CD8-positive, alpha-beta memory T cell (primary cell): ENCODE measurements at regions of chr12 and their contacts with region 1.

Region 1: GRCh38 chr12:9813821-9814809 is 13.2 kb upstream of the KLRF1 start:
- DNase-seq: peak; percentile 82 to 92 (median 87)
- H3K4me3 ChIP-seq: peak overlapping the region; percentile 54
- H3K4me3 Mint-ChIP-seq: peak overlapping the region; percentile 81 to 93 (median 87)
- H3K27ac ChIP-seq: no peak overlapping the region
- H3K27ac Mint-ChIP-seq: peak overlapping the region; percentile 51 to 90 (median 84)
- H3K4me1 ChIP-seq: peaks cover 6% of the 10 kb centered on the region
- H3K4me1 Mint-ChIP-seq: peaks cover 10 to 18% (median 12%) of the 10 kb centered on the region in 3 donors
- H3K27me3 ChIP-seq: no peaks in the 10 kb centered on the region
- H3K27me3 Mint-ChIP-seq: peaks cover 3 to 20% of the 10 kb centered on the region in 2 donors

Region 2: DNA sequence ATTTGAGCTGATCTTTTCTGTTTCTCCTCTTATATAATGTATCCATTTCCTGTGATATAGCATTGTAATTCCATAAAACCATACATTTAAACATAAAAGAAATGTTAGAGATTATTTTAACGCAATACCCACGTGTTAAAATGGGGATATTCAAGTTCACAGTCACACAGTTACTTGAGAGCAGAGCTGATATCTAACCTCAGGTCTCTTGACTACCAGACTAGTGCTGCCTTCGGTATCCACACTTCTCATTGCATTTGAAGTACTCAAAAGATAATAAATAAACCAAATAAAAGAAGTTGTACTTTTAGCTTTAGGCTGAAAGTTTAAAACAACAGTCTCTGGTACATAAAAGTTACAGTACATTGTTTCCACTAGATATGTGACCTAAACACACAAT is 84.1 kb before region 1 on chr12:
- CTCF ChIA-PET with region 1: no interaction called
- POLR2A ChIA-PET with region 1: no interaction called
- DNase-seq: no peak
- H3K4me3 ChIP-seq: no peak overlapping the region
- H3K4me3 Mint-ChIP-seq: peak overlapping the region in 2 of 7 donors; percentile 15 to 83
- H3K27ac ChIP-seq: no peak overlapping the region
- H3K27ac Mint-ChIP-seq: peak overlapping the region in 1 of 8 donors; percentile 73
- H3K4me1 ChIP-seq: peaks cover 3% of the 10 kb centered on the region
- H3K4me1 Mint-ChIP-seq: peaks cover 8 to 41% (median 13%) of the 10 kb centered on the region in 3 donors
- H3K27me3 ChIP-seq: no peaks in the 10 kb centered on the region
- H3K27me3 Mint-ChIP-seq: no peaks in the 10 kb centered on the region

Region 3: DNA sequence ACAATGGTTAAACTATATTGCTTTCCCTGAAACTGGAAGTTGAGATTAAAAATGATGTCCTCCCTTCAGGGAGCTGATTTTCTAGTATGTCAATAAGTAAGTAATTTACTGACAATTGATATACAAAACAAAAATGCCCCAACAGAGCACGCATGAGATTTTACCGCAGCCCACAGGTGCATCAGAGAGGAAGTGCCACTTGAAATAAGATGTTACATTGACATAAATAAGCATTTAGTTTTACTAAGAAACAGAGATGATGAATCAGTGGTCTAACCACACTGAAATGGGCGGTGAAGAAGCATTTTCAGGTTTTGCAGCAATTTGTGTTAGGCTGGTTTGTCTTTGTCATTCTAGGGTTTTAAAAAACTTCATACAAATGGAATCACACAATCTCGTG is 72.4 kb before region 1 on chr12:
- CTCF ChIA-PET with region 1: interaction called, 104 read pairs
- POLR2A ChIA-PET with region 1: no interaction called
- DNase-seq: peak; percentile 50 to 90 (median 89)
- H3K4me3 ChIP-seq: peak overlapping the region; percentile 33
- H3K4me3 Mint-ChIP-seq: peak overlapping the region; percentile 33 to 88 (median 82)
- H3K27ac ChIP-seq: peak overlapping the region; percentile 60
- H3K27ac Mint-ChIP-seq: peak overlapping the region; percentile 19 to 99 (median 97)
- H3K4me1 ChIP-seq: peaks cover 62% of the 10 kb centered on the region
- H3K4me1 Mint-ChIP-seq: peaks cover 53 to 80% (median 75%) of the 10 kb centered on the region in 3 donors
- H3K27me3 ChIP-seq: no peaks in the 10 kb centered on the region
- H3K27me3 Mint-ChIP-seq: no peaks in the 10 kb centered on the region

Region 4: DNA sequence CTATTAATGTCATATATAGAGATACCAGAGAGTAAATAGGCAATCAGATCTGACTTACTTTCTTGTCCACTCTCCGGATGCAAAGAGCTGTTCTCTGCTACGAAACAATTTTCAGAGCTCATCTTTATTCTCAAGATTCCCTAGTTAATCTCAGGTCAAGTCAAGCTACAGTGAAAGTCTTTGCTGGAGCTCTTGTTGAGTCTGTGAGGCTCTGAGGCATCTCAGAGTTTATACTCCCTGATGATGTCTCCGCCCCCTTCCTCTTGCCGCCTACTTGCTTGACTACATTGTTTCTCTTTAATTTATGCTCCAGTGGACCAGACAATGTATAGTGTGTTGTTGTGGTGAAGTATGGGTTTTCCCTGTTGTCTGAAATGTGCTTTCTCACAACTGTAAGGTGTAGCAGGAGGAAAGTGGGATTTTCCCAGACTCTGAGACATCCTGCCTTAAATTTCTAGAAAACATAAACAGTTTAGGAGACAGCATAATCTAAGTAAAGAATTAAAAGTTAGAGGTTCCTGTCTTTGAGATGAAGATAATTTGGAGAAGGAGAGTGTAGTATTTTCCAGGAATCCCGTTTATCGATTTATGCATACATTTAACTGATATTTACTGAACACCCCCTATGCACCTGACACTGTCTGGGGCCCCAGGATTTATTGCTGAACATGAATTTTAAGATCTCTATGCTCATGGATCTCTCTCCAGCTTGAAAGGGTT is 53.3 kb before region 1 on chr12 and contains the start of gene CD69:
- CTCF ChIA-PET with region 1: interaction called, 12 read pairs
- POLR2A ChIA-PET with region 1: no interaction called
- DNase-seq: peak; percentile 66 to 89 (median 85)
- H3K4me3 ChIP-seq: peak within 1 kb of the TSS; percentile 68
- H3K4me3 Mint-ChIP-seq: peak within 1 kb of the TSS; percentile 93 to 100 (median 98)
- H3K27ac ChIP-seq: peak within 1 kb of the TSS; percentile 96
- H3K27ac Mint-ChIP-seq: peak within 1 kb of the TSS; percentile 97 to 100 (median 99)
- H3K4me1 ChIP-seq: peaks cover 49% of the 10 kb centered on the region
- H3K4me1 Mint-ChIP-seq: peaks cover 58 to 72% (median 71%) of the 10 kb centered on the region in 3 donors
- H3K27me3 ChIP-seq: no peaks in the 10 kb centered on the region
- H3K27me3 Mint-ChIP-seq: no peaks in the 10 kb centered on the region
- total RNA-seq, gene CD69: 66.8 to 67.1 TPM

Region 5: GRCh38 chr12:9906873-9907272 is 92.8 kb after region 1 on chr12:
- CTCF ChIA-PET with region 1: interaction called, 20 read pairs
- POLR2A ChIA-PET with region 1: no interaction called
- DNase-seq: peak; percentile 6 to 75 (median 67)
- H3K4me3 ChIP-seq: peak overlapping the region; percentile 30
- H3K4me3 Mint-ChIP-seq: peak overlapping the region in 6 of 7 donors; percentile 17 to 67 (median 34)
- H3K27ac ChIP-seq: no peak overlapping the region
- H3K27ac Mint-ChIP-seq: peak overlapping the region; percentile 35 to 90 (median 76)
- H3K4me1 ChIP-seq: peaks cover 25% of the 10 kb centered on the region
- H3K4me1 Mint-ChIP-seq: peaks cover 30 to 45% (median 40%) of the 10 kb centered on the region in 3 donors
- H3K27me3 ChIP-seq: no peaks in the 10 kb centered on the region
- H3K27me3 Mint-ChIP-seq: peaks cover 0 to 1% of the 10 kb centered on the region in 2 donors

Region 6: GRCh38 chr12:9932270-9932669 is 118.2 kb after region 1 on chr12 and contains the start of gene CLEC2A:
- CTCF ChIA-PET with region 1: interaction called, 52 read pairs
- POLR2A ChIA-PET with region 1: no interaction called
- DNase-seq: no peak
- H3K4me3 ChIP-seq: no peak within 1 kb of the TSS
- H3K4me3 Mint-ChIP-seq: no peak within 1 kb of the TSS
- H3K27ac ChIP-seq: no peak within 1 kb of the TSS
- H3K27ac Mint-ChIP-seq: no peak within 1 kb of the TSS
- H3K4me1 ChIP-seq: no peaks in the 10 kb centered on the region
- H3K4me1 Mint-ChIP-seq: no peaks in the 10 kb centered on the region
- H3K27me3 ChIP-seq: no peaks in the 10 kb centered on the region
- H3K27me3 Mint-ChIP-seq: peaks cover 1 to 25% of the 10 kb centered on the region in 2 donors
- total RNA-seq, gene CLEC2A: not detected